ENCODE measurements at regions of chr20 and their contacts with region 1.

Region 1: DNA sequence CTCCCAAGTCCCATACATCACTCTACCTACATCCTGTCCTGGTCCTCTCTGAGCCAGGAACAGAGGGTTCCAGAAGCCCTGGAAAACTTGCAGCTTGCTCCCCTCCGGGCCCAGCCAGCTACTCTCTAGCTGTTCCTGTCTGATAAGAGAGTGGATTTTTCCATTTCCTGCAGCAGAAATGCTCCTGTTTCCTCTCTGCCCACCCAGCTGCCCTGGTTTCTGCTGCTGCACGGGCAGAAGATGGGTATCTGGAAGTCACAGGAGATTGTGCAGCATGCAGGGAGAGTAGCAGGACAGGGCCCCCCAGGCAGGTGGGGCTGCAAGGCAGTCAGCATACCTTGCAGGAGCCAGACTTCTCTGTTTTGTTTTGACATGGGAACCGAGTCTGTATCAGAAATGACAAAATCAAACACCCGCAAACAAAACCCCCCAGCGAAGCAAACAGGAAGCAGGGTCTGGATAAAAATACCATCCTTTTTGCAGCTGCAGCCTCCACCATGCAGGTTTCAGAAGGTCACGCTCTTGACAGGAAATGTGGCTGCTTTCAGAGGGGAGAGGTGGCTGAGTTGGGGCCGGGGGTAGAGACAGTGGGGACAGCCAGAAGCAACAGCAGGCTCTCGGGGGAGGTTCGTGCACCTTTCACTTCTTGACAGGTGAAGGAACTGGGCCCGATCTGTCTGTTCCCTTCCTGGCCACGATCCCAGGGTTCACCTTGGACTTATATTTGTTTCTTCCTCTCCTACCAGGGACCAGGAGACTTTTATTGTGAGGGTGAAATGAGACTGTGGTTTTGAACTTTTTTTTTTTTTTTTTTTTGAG is 50.8 kb upstream of the FAM83D start:
- DNase-seq: peak; percentile 80
- ATAC-seq: peak; percentile 53
- H3K4me3 Mint-ChIP-seq: peak overlapping the region; percentile 80
- H3K27ac Mint-ChIP-seq: peak overlapping the region; percentile 89
- H3K4me1 Mint-ChIP-seq: peaks cover 91% of the 10 kb centered on the region
- H3K27me3 Mint-ChIP-seq: no peaks in the 10 kb centered on the region

Region 2: DNA sequence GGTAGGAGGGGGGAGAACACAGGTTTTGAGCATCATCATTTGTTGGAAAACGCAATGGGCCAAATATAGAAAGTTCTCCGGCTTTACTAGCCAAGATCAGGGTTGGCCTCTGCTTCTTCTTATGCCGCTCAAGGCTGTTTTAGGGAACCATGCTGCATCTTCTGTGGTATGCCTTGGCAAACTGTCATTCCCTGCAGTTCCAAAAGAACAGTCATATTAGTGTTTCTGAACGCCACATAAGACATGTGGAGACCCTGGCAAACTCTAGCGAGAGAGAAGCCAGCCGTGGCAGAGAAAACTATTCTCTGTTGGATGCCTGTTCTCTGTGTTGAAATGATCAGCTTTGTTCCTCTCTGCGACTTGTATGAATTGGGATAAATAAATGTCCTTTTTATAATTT is 116.3 kb before region 1 on chr20:
- CTCF ChIA-PET with region 1: no interaction called
- POLR2A ChIA-PET with region 1: no interaction called
- DNase-seq: no peak
- ATAC-seq: no peak
- H3K4me3 Mint-ChIP-seq: no peak overlapping the region
- H3K27ac Mint-ChIP-seq: no peak overlapping the region
- H3K4me1 Mint-ChIP-seq: peaks cover 10% of the 10 kb centered on the region
- H3K27me3 Mint-ChIP-seq: no peaks in the 10 kb centered on the region

Region 3: DNA sequence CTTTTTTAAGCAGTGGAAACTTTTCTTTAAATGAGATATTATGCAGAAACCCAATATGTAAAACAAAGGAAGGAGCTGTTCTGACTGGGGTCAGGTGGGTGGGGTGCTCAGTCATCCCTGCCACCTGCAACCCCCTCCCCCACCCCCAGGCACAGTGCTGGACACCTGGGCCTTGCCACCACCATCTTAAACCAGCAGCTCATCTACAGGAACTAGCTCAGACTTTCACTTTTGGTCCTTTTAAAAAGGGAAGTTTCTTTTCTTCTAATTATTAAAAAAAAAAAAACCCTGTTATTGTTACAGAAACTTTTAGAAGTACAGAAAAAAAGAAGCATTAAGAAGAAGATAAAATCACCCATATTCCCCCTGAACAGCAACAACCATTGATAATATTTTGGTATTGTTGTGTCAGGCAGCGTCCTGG is 32.8 kb before region 1 on chr20:
- CTCF ChIA-PET with region 1: interaction called, 7 read pairs
- POLR2A ChIA-PET with region 1: interaction called, 20 read pairs
- DNase-seq: peak; percentile 58
- ATAC-seq: peak; percentile 56
- H3K4me3 Mint-ChIP-seq: peak overlapping the region; percentile 64
- H3K27ac Mint-ChIP-seq: peak overlapping the region; percentile 77
- H3K4me1 Mint-ChIP-seq: peaks cover 74% of the 10 kb centered on the region
- H3K27me3 Mint-ChIP-seq: no peaks in the 10 kb centered on the region

Region 4: GRCh38 chr20:38902601-38903000 is 27.2 kb after region 1 on chr20:
- CTCF ChIA-PET with region 1: no interaction called
- POLR2A ChIA-PET with region 1: no interaction called
- DNase-seq: no peak
- ATAC-seq: no peak
- H3K4me3 Mint-ChIP-seq: no peak overlapping the region
- H3K27ac Mint-ChIP-seq: no peak overlapping the region
- H3K4me1 Mint-ChIP-seq: no peaks in the 10 kb centered on the region
- H3K27me3 Mint-ChIP-seq: no peaks in the 10 kb centered on the region